Activated CD4-positive, alpha-beta memory T cell treated with anti-CD3 and anti-CD28 coated beads, Interleukin-2, amount 10 ng/mL, durations not matched to agents 7 days and 5 days (primary cell): ENCODE measurements at regions of chr15 and their contacts with region 1.

Region 1: DNA sequence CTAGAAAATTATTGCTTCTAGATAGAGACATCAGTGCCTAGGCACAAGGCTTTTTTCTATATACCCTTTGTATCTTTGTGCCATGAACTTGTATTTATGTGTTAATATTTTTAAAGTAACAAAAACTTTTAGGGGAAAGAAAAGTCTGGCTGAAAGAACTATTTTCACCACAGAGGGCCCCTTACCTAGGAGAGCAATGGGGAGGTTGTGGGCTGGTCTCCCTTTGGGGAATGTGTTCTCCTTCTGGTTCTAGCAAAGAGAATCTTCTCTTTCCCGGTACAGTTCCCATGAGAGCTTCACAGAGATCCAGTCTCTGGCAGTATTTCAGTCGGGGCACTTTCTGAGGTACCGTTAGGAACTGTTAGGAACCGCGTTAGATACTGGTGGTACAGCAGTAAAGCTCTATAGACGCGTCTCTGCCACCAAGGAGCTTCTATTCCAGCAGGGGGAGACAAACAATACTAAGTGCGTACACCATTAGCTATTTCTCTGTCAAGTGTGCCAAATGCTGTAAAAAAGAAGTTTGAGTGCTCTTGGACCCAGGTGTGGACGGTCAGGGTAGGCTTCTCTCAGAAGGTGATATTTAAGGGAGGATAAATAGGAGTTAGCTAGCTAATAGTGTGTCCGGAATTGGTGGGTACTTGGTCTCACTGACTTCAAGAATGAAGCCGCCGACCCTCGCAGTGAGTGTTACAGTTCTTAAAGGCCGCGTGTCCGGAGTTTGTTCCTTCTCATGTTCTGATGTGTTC is 4.6 kb upstream of the EPB42 start:
- DNase-seq: peak; percentile 54
- H3K4me3 Mint-ChIP-seq: no peak overlapping the region
- H3K27ac Mint-ChIP-seq: no peak overlapping the region
- H3K4me1 Mint-ChIP-seq: peaks cover 5% of the 10 kb centered on the region
- H3K27me3 Mint-ChIP-seq: peaks cover 5% of the 10 kb centered on the region

Region 2: DNA sequence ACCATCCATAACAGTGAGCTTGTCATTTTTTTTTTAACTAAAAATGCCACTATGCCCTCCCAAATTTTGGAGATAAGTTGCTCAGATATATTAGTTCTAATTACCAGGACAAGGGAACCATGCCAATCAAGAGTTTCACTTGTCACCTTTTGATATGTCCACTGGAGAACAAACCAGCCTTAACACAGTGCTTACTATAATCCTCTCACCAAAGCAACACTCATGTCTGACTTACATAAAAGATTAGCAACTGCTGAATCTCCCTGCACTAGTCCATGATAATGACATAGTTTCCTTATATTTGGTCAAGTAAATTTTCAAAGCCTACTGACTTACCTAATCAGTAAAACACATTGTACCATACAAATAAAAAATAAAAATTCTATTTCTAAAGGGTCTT is 349.2 kb before region 1 on chr15:
- CTCF ChIA-PET with region 1: no interaction called
- POLR2A ChIA-PET with region 1: no interaction called
- DNase-seq: no peak
- H3K4me3 Mint-ChIP-seq: no peak overlapping the region
- H3K27ac Mint-ChIP-seq: no peak overlapping the region
- H3K4me1 Mint-ChIP-seq: no peaks in the 10 kb centered on the region
- H3K27me3 Mint-ChIP-seq: no peaks in the 10 kb centered on the region

Region 3: DNA sequence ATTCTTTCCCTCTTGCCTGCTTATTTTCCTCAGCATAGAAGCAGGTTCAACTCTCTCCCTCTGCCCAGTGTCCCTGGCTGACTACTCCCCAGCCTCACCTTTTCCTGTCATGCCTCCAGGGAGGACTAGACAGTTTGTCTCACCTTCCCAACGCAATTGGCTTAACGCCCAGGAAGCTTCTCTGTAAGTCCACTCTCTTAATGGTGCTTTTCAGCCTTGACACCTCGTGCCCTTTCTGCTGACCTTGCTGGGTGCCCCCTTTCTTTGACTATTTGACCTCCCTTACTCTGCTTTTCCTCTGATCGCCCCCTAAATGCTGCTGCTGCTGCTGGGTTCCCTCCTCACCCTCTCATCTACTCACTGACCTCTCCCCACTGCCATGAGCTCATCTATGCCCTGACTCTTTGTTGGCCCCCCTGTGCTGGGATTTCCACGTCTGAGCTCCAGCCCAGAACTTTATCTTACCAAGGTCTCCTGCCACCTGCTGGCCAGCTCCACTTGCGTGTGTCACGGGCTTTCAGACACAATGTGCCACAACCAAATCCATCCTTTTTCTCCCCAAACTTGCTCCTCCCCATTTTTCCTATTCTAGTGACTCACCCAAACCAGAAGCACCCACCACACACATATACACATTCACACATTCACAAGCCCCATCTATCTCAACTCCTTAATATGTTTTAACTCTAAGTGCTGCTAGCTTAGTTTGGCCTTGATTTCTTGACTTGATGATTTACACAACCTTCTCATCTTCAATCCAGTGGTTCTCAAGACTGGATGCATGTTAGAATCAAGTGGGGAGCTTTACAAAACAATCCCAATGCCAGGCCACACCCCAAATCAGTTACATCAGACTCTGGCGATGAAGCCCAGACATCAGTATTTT is 21.1 kb before region 1 on chr15:
- CTCF ChIA-PET with region 1: interaction called, 18 read pairs
- POLR2A ChIA-PET with region 1: no interaction called
- DNase-seq: peak; percentile 55
- H3K4me3 Mint-ChIP-seq: no peak overlapping the region
- H3K27ac Mint-ChIP-seq: no peak overlapping the region
- H3K4me1 Mint-ChIP-seq: peaks cover 11% of the 10 kb centered on the region
- H3K27me3 Mint-ChIP-seq: peaks cover 14% of the 10 kb centered on the region

Region 4: DNA sequence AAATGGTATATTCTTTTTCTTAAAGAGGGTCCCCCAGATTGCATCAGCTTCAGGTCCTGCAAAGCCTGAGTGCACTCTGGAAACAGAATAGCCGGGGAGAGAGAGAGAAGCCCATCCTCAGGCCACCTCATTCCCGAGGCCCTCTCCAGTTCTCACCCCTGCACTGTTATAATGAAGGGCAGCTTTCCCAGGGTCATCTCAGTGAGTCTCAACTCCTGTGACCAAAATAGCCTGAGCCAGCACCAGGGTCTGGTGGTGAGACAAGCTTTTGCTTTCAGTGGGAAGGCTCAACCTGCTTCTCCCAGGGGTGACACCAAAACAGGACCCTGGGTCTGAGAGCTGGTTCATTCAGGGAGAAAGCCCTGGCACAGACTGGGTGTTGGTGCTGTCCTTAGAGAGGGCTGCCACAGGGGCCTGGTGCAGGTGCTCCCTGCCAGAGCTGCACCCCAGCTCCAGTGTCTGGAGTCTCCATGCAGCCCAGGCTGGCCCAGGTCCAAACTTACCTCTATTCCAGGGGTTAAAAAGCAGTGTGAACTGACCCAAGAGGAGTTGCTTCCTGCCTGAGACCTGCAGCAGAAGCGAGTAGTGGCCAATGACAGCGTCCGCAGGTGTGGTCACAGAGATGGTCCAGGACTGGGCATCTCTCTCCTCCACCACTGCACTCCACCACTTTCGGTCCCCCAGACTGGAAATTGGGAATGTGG is 10.6 kb before region 1 on chr15:
- CTCF ChIA-PET with region 1: interaction called, 12 read pairs
- POLR2A ChIA-PET with region 1: no interaction called
- DNase-seq: no peak
- H3K4me3 Mint-ChIP-seq: no peak overlapping the region
- H3K27ac Mint-ChIP-seq: no peak overlapping the region
- H3K4me1 Mint-ChIP-seq: no peaks in the 10 kb centered on the region
- H3K27me3 Mint-ChIP-seq: peaks cover 6% of the 10 kb centered on the region

Region 5: DNA sequence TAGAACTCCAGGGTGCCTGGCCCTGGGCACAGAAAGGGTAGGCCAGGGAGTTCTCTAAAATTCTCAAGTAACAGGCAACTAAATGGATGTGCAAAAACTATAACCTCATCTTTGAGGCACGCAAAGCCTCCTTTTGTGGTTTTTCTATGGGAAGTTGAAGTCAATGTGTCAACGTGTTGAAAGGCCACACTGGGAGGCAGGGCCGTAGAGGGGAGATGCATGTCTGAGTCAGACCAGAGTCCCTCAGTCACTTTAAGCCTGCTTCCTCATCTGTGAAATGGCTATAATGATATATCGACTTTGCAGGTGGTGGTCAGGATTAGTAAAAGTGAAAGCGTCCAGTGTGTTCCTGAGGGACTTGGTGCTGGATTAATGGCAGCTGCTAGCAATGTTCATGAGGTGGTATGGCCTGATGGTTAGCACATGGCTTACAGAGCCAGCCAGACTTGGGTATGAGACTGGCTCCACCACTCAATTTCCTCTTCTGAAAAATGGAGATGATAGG is 24.4 kb after region 1 on chr15:
- CTCF ChIA-PET with region 1: interaction called, 14 read pairs
- POLR2A ChIA-PET with region 1: no interaction called
- DNase-seq: peak; percentile 42
- H3K4me3 Mint-ChIP-seq: no peak overlapping the region
- H3K27ac Mint-ChIP-seq: peak overlapping the region; percentile 67
- H3K4me1 Mint-ChIP-seq: peaks cover 48% of the 10 kb centered on the region
- H3K27me3 Mint-ChIP-seq: peaks cover 7% of the 10 kb centered on the region

Region 6: GRCh38 chr15:43268111-43269105 is 43.0 kb after region 1 on chr15:
- CTCF ChIA-PET with region 1: interaction called, 46 read pairs
- POLR2A ChIA-PET with region 1: no interaction called
- DNase-seq: no peak
- H3K4me3 Mint-ChIP-seq: no peak overlapping the region
- H3K27ac Mint-ChIP-seq: no peak overlapping the region
- H3K4me1 Mint-ChIP-seq: peaks cover 14% of the 10 kb centered on the region
- H3K27me3 Mint-ChIP-seq: peaks cover 34% of the 10 kb centered on the region

Region 7: DNA sequence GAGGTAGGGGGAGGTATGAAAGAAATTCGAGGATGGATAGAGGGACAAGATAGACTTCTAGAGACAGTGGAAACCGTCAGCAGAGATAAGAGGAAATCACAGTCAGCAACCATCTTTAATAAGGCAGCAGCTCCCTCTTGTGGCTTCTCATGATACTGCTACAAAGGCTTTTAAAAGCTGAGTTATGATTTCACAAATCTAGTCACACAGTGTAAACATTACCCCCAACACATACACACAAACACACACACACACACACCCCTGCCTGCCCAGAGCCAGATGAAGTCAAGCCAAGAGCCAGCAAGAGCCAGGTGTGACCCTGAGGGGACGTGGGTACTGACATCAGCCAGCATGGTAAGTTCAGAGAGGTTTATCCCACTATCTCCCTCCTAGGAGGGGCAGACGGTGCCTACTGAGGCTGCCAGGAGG is 60.2 kb after region 1 on chr15:
- CTCF ChIA-PET with region 1: interaction called, 162 read pairs
- POLR2A ChIA-PET with region 1: interaction called, 13 read pairs
- DNase-seq: peak; percentile 64
- H3K4me3 Mint-ChIP-seq: no peak overlapping the region
- H3K27ac Mint-ChIP-seq: no peak overlapping the region
- H3K4me1 Mint-ChIP-seq: peaks cover 6% of the 10 kb centered on the region
- H3K27me3 Mint-ChIP-seq: peaks cover 15% of the 10 kb centered on the region

Region 8: DNA sequence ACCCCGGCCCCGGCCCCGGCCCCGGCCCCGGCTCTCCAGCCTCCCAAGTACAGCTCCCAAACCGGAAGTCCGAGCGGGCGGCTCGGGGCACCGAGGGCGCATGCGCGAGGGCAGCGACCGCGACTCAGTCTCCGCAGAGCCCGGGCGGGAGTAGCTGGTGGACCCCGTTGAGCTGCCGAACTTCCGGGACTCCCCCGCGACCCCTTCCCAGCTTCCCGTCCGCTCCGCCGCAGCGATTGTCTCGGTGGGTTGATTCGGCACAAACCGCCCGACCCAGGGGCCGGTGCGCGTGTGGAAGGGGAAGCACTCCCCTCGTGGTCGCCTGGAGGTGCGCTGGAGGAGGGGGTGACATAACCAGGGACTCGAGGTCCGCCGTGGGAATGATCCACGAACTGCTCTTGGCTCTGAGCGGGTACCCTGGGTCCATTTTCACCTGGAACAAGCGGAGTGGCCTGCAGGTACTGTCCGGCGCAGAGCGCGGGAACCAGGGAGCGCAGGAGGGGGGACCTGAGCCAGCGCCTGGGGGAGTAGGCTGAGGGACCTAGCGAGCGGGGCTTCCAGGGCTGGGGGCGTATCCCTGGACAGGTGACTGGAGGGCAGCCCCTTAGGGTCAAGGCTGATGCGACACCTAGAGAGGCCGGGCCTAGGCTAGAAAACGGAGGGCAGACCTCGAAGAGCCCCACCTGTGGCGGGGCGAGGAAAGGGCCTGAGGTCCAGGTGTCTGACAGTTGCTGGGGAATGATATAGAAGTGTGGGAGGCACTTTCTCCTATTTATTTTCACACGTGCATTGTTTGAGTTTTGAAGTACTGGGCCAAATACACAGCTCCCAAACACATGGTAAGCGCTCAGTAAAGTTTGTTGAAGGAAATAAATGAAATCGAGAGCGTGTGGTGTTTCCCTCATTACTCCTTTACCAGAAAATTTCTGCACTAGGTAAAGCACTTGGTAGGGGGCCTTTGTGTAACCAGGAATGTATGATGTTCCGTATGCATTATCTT is 145.9 kb after region 1 on chr15 and contains the starts of genes TUBGCP4 and ZSCAN29:
- CTCF ChIA-PET with region 1: interaction called, 10 read pairs
- POLR2A ChIA-PET with region 1: no interaction called
- DNase-seq: peak; percentile 82
- H3K4me3 Mint-ChIP-seq: peak within 1 kb of the TSS; percentile 87
- H3K27ac Mint-ChIP-seq: peak within 1 kb of the TSS; percentile 79
- H3K4me1 Mint-ChIP-seq: peaks cover 52% of the 10 kb centered on the region
- H3K27me3 Mint-ChIP-seq: no peaks in the 10 kb centered on the region
- total RNA-seq, gene TUBGCP4: 30.4 to 34.7 TPM
- total RNA-seq, gene ZSCAN29: 29.4 to 30.1 TPM